Heart right ventricle (tissue), 16 donors: ENCODE measurements at regions of chr17 and their contacts with region 1.

Region 1: DNA sequence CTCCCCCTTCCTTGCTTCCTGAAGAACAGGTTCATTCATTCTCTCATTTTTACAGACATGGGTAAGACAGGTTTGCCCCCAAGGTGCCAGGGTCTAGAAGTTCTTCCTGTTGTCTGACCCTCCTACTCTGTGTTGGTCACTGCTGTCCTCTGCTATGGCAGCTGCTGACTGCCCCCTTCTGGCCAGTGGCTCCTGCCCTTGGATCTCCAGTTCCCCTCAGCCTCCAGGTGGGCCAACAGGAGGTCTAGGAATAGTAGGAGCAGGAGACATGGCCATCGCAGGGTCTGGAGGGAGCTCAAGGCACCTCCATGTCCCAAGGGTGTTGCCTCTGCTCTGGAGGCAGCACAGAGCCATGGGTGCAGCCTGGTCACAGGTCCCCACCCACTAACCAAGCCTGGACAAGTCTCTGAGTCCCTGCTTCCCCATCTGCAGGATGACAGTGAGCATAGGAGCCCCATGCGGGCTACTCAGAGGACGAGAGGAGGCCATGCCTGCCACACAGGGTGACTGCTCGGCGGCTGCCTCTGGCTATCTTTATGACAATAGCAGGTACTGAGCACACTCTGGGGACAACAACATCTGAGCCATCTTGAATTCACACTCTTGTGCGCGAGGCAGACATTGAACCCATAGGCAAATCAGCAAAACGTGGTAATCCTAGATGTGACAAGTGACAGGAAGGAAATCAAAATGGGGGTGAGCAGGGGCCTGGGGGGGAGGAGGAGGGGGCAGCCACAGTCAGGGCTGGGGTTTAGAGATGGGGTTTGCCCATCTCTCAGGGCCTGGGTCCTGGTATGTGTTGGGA is 27.0 kb upstream of the NXPH3 start:
- DNase-seq: peak in 1 of 2 donors; percentile 64
- ATAC-seq: peak; percentile 43 to 78 (median 70)
- H3K4me3 ChIP-seq: no peak overlapping the region
- H3K27ac ChIP-seq: peak overlapping the region in 2 of 10 donors; percentile 40 to 65
- H3K4me1 ChIP-seq: peaks cover 0 to 23% (median 0%) of the 10 kb centered on the region in 9 donors
- H3K27me3 ChIP-seq: peaks cover 0 to 18% (median 0%) of the 10 kb centered on the region in 7 donors
- CTCF ChIP-seq: peak; percentile 20 to 73 (median 63)

Region 2: DNA sequence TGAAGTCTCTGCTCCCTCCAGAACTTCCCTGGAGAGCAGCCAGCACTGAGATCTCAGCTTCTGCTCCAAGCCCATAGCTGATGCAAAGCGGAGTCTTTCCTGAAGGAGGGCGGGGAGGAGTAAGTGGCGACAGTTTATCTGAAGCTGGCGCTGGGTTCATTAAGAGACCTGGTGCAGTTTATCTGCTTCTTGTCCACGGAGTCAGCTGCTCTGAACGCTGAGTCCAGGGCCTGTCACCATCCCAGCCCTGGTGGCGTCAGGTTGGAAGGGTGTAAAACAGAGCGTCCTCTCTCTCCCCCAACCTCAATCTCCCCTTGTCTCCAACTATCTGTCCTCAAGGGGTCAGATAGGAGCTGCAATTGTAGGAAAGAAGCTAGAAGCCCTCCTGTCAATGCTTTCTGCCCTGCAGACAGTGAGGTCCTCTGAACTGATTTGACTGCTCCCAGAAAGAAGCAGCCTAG is 1047.7 kb before region 1 on chr17:
- intact Hi-C with region 1: no loop called
- DNase-seq: no peak
- ATAC-seq: peak in 1 of 8 donors; percentile 19
- H3K4me3 ChIP-seq: no peak overlapping the region
- H3K27ac ChIP-seq: no peak overlapping the region
- H3K4me1 ChIP-seq: peaks cover 0 to under 1% (median 0%) of the 10 kb centered on the region in 9 donors
- H3K27me3 ChIP-seq: peaks cover 0 to 93% (median 83%) of the 10 kb centered on the region in 7 donors
- CTCF ChIP-seq: peak in 2 of 9 donors; percentile 7 to 25

Region 3: GRCh38 chr17:49434821-49435670 is 113.7 kb before region 1 on chr17:
- intact Hi-C with region 1: loop called in 7 of 10 experiments (anchors 2 to 5 kb)
- DNase-seq: peak in 1 of 2 donors; percentile 43
- ATAC-seq: peak; percentile 32 to 74 (median 64)
- H3K4me3 ChIP-seq: no peak overlapping the region
- H3K27ac ChIP-seq: no peak overlapping the region
- H3K4me1 ChIP-seq: peaks cover 0 to 8% (median 0%) of the 10 kb centered on the region in 9 donors
- H3K27me3 ChIP-seq: peaks cover 0 to 34% (median 30%) of the 10 kb centered on the region in 7 donors
- CTCF ChIP-seq: peak; percentile 70 to 83 (median 76)

Region 4: DNA sequence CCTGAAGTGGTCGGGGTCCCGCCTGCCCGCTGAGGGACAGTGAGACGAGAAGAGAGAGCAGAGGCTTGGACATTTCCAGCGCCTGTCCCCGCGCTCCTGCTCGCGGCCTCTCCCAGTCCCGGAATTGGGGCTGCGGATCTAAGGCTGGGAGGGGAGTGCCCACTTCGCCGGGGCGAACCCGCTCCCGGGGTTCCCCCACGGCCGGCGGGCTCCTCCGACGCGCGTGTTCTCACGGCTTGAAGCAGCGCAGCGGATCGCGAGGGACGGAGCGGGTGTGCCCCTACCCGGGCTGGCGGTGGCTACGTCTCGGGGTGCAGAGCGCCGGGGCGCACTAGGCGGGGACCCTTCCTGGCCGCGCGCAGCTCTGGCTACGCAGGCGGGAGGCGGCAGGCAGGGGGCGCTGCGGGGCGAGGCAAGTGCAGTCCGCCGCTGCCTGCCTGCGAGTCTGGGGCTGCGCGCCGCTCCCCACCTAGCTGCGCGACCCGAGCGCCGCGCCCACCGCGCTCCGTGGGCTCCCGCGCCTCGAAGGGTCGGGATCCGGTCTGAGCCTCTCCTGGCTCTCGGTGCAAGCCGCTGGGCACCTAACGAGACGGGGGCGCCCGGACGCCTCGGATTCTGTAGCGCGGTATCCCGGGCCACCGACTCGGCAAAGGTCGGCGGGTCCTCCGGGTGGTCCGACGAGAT is 52.4 kb before region 1 on chr17:
- intact Hi-C with region 1: loop called in 5 of 10 experiments (anchors 2 to 5 kb)
- DNase-seq: peak; percentile 73 to 85
- ATAC-seq: peak; percentile 80 to 89 (median 87)
- H3K4me3 ChIP-seq: peak overlapping the region; percentile 36 to 68 (median 62)
- H3K27ac ChIP-seq: peak overlapping the region in 4 of 10 donors; percentile 29 to 53 (median 46)
- H3K4me1 ChIP-seq: peaks cover 0 to 40% (median 29%) of the 10 kb centered on the region in 9 donors
- H3K27me3 ChIP-seq: peaks cover 0 to 95% (median 71%) of the 10 kb centered on the region in 7 donors
- CTCF ChIP-seq: peak; percentile 79 to 93 (median 87)